H1 (cell line): ENCODE measurements at regions of chr11 and their contacts with region 1.

Region 1: GRCh38 chr11:76721755-76722677 is 51.5 kb upstream of the LRRC32 start:
- DNase-seq: peak; percentile 54 to 95
- H3K4me3 ChIP-seq: no peak overlapping the region
- H3K27ac ChIP-seq: no peak overlapping the region
- H3K4me1 ChIP-seq: peaks cover 0 to 2% (median 0%) of the 10 kb centered on the region in 4 experiments; a peak in 1 of 7 replicates
- H3K27me3 ChIP-seq: no peaks in the 10 kb centered on the region; a peak in 2 of 7 replicates
- CTCF ChIP-seq: peak; percentile 91 to 94 (median 92)
- EP300 ChIP-seq: no peak
- POLR2A ChIP-seq: no peak
- RAD21 ChIP-seq: peak; percentile 72 to 80

Region 2: DNA sequence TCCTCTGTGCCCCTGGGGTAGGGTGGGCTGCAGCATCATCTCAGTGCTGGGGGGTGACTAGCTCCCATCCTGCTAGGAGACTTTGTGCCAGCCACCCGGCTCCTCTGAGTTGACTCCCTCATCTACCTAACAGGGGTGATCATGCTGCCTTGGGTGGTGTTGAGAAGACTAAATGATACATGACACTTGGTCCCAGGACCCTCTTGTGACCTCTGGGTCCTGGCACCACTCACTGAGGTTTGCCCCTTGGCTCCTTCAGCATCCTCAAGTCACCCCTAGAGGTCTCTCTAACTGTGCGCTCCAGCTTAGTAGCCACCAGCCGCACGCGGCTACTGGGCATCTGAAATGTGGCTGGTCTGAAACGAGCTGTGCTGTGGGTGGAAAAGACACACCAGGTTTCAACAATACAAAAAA is 123.6 kb before region 1 on chr11:
- CTCF ChIA-PET with region 1: interaction called, 12 read pairs
- POLR2A ChIA-PET with region 1: no interaction called
- DNase-seq: peak in 1 of 2 experiments; percentile 62
- H3K4me3 ChIP-seq: no peak overlapping the region
- H3K27ac ChIP-seq: no peak overlapping the region
- H3K4me1 ChIP-seq: no peaks in the 10 kb centered on the region
- H3K27me3 ChIP-seq: no peaks in the 10 kb centered on the region
- CTCF ChIP-seq: peak; percentile 71 to 82 (median 79)
- EP300 ChIP-seq: no peak
- POLR2A ChIP-seq: no peak
- RAD21 ChIP-seq: peak; percentile 83 to 90

Region 3: GRCh38 chr11:76708946-76709678 is 12.9 kb before region 1 on chr11:
- CTCF ChIA-PET with region 1: interaction called, 20 read pairs
- POLR2A ChIA-PET with region 1: interaction called, 4 read pairs
- DNase-seq: no peak
- H3K4me3 ChIP-seq: no peak overlapping the region
- H3K27ac ChIP-seq: no peak overlapping the region
- H3K4me1 ChIP-seq: peaks cover 0 to 6% (median 2%) of the 10 kb centered on the region in 4 experiments; a peak in 2 of 7 replicates
- H3K27me3 ChIP-seq: no peaks in the 10 kb centered on the region
- CTCF ChIP-seq: no peak
- EP300 ChIP-seq: no peak
- POLR2A ChIP-seq: no peak
- RAD21 ChIP-seq: no peak

Region 4: GRCh38 chr11:76748948-76749347 is 26.9 kb after region 1 on chr11:
- CTCF ChIA-PET with region 1: interaction called, 18 read pairs
- POLR2A ChIA-PET with region 1: no interaction called
- DNase-seq: no peak
- H3K4me3 ChIP-seq: no peak overlapping the region
- H3K27ac ChIP-seq: no peak overlapping the region
- H3K4me1 ChIP-seq: peaks cover 0 to 14% (median 5%) of the 10 kb centered on the region in 4 experiments; a peak in 6 of 7 replicates
- H3K27me3 ChIP-seq: no peaks in the 10 kb centered on the region
- CTCF ChIP-seq: no peak
- EP300 ChIP-seq: no peak
- POLR2A ChIP-seq: no peak
- RAD21 ChIP-seq: no peak

Region 5: DNA sequence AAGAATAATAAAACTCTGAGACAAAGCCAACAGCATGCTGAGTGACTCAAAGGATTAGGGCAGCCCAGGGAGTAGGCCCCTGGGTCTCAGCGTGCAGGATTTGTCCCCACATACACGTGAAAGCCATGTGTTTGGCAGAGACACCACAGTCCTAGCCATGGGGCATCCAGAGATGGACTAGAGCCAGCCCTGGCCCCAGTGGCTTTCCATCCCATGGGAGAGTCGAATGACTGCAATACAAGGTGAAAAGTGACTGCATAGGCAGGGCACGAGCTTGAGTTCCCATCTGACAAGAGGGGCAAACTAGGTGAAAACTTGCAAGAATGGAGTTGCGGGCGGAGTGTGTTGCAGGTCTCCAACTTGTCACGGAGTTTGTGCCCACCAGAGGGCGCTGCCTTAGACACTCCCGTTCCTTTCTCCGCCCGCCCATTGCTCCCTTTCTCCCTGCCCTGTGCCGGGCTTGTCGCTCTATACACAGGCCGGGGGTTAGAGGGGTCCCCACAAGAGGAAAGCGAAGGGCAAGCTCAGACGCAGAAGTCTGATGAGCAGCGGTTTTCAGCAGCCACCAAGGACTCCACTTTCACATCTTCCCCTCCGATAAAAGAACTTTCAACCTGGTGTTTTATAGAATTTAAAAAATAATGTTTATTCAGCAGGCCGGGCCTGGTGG is 85.3 kb after region 1 on chr11:
- CTCF ChIA-PET with region 1: interaction called, 55 read pairs
- POLR2A ChIA-PET with region 1: no interaction called
- DNase-seq: peak in 1 of 2 experiments; percentile 98
- H3K4me3 ChIP-seq: no peak overlapping the region
- H3K27ac ChIP-seq: no peak overlapping the region
- H3K4me1 ChIP-seq: peaks cover 0 to 4% (median 2%) of the 10 kb centered on the region in 4 experiments; a peak in 2 of 7 replicates
- H3K27me3 ChIP-seq: no peaks in the 10 kb centered on the region; a peak in 1 of 7 replicates
- CTCF ChIP-seq: peak; percentile 80 to 94 (median 87)
- EP300 ChIP-seq: no peak
- POLR2A ChIP-seq: no peak
- RAD21 ChIP-seq: peak; percentile 67 to 70

Region 6: DNA sequence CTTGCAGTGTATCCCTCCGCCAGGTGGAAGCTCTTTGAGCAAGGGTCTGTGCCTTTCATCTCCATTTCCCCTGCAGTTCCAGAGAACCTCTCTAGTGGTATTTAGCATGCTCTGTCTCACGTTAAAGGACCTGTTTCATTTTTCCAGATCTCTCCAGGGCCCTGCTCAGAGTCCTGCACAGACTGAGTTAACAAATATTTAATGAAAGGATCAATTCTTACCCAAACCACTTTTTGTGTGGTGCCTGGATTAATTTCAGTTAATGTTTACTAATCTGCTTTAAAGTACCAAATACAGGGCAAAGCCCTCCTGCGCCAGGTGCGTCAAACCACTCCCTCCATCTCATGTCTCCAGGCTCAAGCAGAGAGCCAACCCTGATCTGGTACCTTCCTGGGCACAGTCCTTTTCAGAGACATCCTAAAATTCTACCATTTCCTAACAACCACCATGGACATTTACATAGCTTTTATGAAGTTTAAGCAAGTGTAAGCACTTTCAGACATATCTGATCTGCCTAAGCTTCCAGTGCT is 120.0 kb after region 1 on chr11:
- CTCF ChIA-PET with region 1: interaction called, 17 read pairs
- POLR2A ChIA-PET with region 1: no interaction called
- DNase-seq: no peak
- H3K4me3 ChIP-seq: no peak overlapping the region
- H3K27ac ChIP-seq: no peak overlapping the region
- H3K4me1 ChIP-seq: peaks cover 0 to 4% (median 0%) of the 10 kb centered on the region in 4 experiments; a peak in 1 of 7 replicates
- H3K27me3 ChIP-seq: no peaks in the 10 kb centered on the region
- CTCF ChIP-seq: no peak
- EP300 ChIP-seq: no peak
- POLR2A ChIP-seq: no peak
- RAD21 ChIP-seq: no peak